ENCODE measurements at regions of chr11 and their contacts with region 1.

Region 1: GRCh38 chr11:8263769-8264410 is at the start of gene LMO1:
- DNase-seq: peak; percentile 90
- H3K27ac ChIP-seq: peak within 1 kb of the TSS; percentile 41; the same call in 1 of the 2 replicates
- CTCF ChIP-seq: peak; percentile 90

Region 2: GRCh38 chr11:7874061-7874460 is 389.8 kb before region 1 on chr11:
- CTCF ChIA-PET with region 1: no interaction called
- POLR2A ChIA-PET with region 1: no interaction called
- DNase-seq: no peak
- H3K27ac ChIP-seq: no peak overlapping the region
- CTCF ChIP-seq: no peak

Region 3: GRCh38 chr11:8192016-8192895 is 71.6 kb before region 1 on chr11:
- CTCF ChIA-PET with region 1: interaction called, 12 read pairs
- POLR2A ChIA-PET with region 1: no interaction called
- DNase-seq: peak; percentile 71
- H3K27ac ChIP-seq: no peak overlapping the region
- CTCF ChIP-seq: peak; percentile 85

Region 4: GRCh38 chr11:8219257-8220021 is 44.5 kb before region 1 on chr11:
- CTCF ChIA-PET with region 1: interaction called, 31 read pairs
- POLR2A ChIA-PET with region 1: no interaction called
- DNase-seq: peak; percentile 50
- H3K27ac ChIP-seq: no peak overlapping the region
- CTCF ChIP-seq: peak; percentile 73

Region 5: DNA sequence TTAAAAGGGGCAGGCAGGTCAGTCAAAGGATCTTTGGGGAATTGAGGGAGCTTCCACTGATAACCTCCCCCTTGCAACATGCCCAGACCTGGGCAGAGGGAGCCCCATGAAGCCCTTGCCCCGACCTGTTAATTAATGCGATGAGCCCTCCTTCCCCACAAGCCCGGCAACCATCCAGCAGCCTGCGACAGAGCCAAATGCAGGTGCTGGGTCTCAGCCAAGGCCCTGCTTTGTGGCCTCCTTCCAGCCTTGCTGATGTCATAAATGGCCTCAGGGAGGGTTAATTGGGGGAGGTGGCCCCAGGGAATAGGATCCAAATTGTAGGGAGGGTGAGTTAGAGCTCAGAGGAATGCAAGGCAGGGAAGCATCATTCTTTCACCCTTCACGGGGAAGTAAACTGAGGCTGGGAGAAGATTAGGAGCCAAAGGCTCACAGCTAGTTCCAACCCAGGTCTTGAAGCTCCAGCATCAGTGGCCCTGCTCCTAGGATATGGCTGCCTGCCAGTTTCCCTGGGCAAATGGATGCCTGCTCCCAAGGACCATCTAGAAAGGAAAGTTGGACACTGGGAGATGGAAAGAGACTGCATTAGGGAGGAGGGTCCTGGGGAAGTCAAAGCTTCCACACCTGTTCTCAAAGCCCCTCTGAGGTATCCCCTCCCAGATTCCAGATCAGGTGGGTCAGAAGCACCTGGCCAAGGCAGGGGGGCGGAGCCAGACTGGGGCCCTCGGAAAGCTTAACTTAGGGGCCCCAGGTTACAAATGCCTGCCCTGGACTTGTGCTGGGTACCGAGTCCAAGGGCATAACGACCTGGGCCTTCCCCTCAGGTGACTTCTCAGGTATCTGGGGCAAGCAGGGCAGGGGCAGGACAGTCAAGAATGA is 34.4 kb before region 1 on chr11:
- CTCF ChIA-PET with region 1: interaction called, 13 read pairs
- POLR2A ChIA-PET with region 1: no interaction called
- DNase-seq: peak; percentile 85
- H3K27ac ChIP-seq: peak overlapping the region; percentile 98
- CTCF ChIP-seq: no peak

Region 6: DNA sequence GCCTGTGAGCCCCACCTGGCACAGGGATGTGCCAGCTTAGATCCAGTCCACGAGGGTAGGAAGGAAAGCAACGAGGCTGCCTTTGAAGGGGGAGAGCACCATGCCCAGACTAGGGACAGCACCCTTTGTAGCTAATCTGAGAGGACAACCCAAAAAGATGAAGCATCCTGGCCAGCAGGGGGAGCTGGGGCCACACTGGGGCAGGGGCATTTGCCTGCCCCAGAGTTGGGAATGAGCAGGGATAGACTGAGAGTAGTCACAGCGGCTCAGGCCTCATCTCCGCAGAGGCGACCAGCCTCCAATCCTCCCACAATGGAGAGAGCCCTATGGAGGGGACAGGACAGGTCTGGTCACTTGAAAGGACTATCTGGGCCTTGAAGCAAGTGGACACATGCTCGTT is 16.6 kb before region 1 on chr11:
- CTCF ChIA-PET with region 1: interaction called, 28 read pairs
- POLR2A ChIA-PET with region 1: no interaction called
- DNase-seq: no peak
- H3K27ac ChIP-seq: no peak overlapping the region
- CTCF ChIP-seq: no peak; the same call in 1 of the 2 replicates

Region 7: GRCh38 chr11:8252388-8252787 is 11.5 kb before region 1 on chr11:
- CTCF ChIA-PET with region 1: interaction called, 28 read pairs
- POLR2A ChIA-PET with region 1: no interaction called
- DNase-seq: no peak
- H3K27ac ChIP-seq: no peak overlapping the region; the same call in 1 of the 2 replicates
- CTCF ChIP-seq: no peak

Region 8: GRCh38 chr11:8989453-8989852 is 725.6 kb after region 1 on chr11:
- CTCF ChIA-PET with region 1: no interaction called
- POLR2A ChIA-PET with region 1: no interaction called
- DNase-seq: no peak
- H3K27ac ChIP-seq: no peak overlapping the region
- CTCF ChIP-seq: no peak

Measured in RWPE1 (cell line).